ENCODE measurements at regions of chr10 and their contacts with region 1.

Region 1: DNA sequence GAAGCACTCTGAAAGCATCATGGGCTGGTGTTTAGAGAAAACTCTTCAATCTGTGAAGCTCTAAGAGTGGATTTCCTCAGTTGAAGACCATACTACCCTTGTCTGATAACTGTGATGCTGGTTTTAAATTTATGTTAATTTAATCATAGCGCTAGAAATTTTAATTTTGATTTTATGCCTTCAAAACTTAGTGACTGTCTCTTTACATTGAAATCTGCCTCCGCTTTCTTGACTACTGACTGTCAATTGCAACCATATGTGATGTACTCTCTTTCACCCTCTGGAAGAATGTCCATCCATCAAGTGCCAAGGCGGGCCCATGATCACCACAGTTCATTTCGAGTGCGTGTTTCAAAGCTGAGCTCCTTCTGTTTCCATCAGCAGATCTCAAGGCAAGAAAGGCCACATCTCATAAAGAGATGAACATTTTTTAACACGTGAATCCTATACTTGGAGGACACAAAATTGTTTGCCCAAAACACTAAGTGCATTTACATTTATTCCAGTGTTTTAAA is 147.1 kb downstream of the ITGA8 start:
- DNase-seq: no peak
- H3K4me3 ChIP-seq: no peak overlapping the region
- H3K27ac ChIP-seq: no peak overlapping the region
- H3K4me1 ChIP-seq: peaks cover 0 to 2% (median 0%) of the 10 kb centered on the region in 4 experiments; a peak in 1 of 7 replicates
- H3K27me3 ChIP-seq: no peaks in the 10 kb centered on the region
- CTCF ChIP-seq: no peak
- EP300 ChIP-seq: no peak
- POLR2A ChIP-seq: no peak
- RAD21 ChIP-seq: no peak

Region 2: GRCh38 chr10:15548381-15548780 is 24.2 kb before region 1 on chr10:
- CTCF ChIA-PET with region 1: no interaction called
- POLR2A ChIA-PET with region 1: no interaction called
- DNase-seq: no peak
- H3K4me3 ChIP-seq: no peak overlapping the region
- H3K27ac ChIP-seq: no peak overlapping the region
- H3K4me1 ChIP-seq: peaks cover 0 to 3% (median 0%) of the 10 kb centered on the region in 4 experiments; a peak in 1 of 7 replicates
- H3K27me3 ChIP-seq: no peaks in the 10 kb centered on the region
- CTCF ChIP-seq: no peak
- EP300 ChIP-seq: no peak
- POLR2A ChIP-seq: no peak
- RAD21 ChIP-seq: no peak

Region 3: GRCh38 chr10:15585303-15585715 is 12.7 kb after region 1 on chr10:
- CTCF ChIA-PET with region 1: interaction called, 11 read pairs
- POLR2A ChIA-PET with region 1: no interaction called
- DNase-seq: peak; percentile 53 to 84
- H3K4me3 ChIP-seq: no peak overlapping the region
- H3K27ac ChIP-seq: no peak overlapping the region
- H3K4me1 ChIP-seq: no peaks in the 10 kb centered on the region
- H3K27me3 ChIP-seq: no peaks in the 10 kb centered on the region
- CTCF ChIP-seq: peak; percentile 83 to 90 (median 90)
- EP300 ChIP-seq: no peak
- POLR2A ChIP-seq: no peak
- RAD21 ChIP-seq: peak; percentile 81 to 84

Measured in H1 (cell line).